HCT116 (cell line): ENCODE measurements at regions of chr13 and their contacts with region 1.

Region 1: GRCh38 chr13:81017513-81018152 is 676.7 kb upstream of the SPRY2 start:
- DNase-seq: peak; percentile 16
- ATAC-seq: no peak
- H3K4me3 ChIP-seq: no peak overlapping the region
- H3K27ac ChIP-seq: no peak overlapping the region
- H3K4me1 ChIP-seq: no peaks in the 10 kb centered on the region
- H3K27me3 ChIP-seq: no peaks in the 10 kb centered on the region
- CTCF ChIP-seq: peak; percentile 16 to 53 (median 27); a peak in 3 of 6 replicates
- POLR2A ChIP-seq: no peak
- RAD21 ChIP-seq: peak; percentile 56

Region 2: DNA sequence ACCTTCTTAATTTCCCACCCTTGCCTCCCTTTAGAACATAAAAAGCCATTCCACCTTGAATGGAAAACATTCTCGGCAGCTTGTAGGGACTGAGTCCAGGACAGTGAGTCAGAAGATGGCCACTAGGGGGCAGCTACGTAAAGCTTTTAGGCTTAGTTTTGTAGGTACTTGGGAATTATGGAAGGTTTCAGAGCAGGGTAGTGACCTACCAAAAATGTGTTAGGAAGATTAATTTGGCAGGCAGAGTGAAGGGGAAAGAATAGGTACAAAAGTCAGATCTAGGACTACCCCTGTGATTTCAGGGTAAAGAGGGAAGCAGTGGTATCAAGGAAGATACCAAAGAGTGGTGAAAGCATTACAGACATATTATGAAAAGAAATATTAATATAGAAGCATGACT is 1338.3 kb before region 1 on chr13:
- CTCF ChIA-PET with region 1: interaction called, 7 read pairs
- POLR2A ChIA-PET with region 1: no interaction called
- RAD21 ChIA-PET with region 1: no interaction called
- intact Hi-C with region 1: loop called (anchors 2 kb)
- DNase-seq: peak; percentile 56
- ATAC-seq: peak; percentile 80
- H3K4me3 ChIP-seq: no peak overlapping the region
- H3K27ac ChIP-seq: no peak overlapping the region
- H3K4me1 ChIP-seq: no peaks in the 10 kb centered on the region
- H3K27me3 ChIP-seq: no peaks in the 10 kb centered on the region
- CTCF ChIP-seq: peak; percentile 40 to 87 (median 76); a peak in 5 of 6 replicates
- POLR2A ChIP-seq: no peak
- RAD21 ChIP-seq: peak; percentile 68; the same call in 1 of the 2 replicates

Region 3: GRCh38 chr13:80979035-80979641 is 38.5 kb before region 1 on chr13:
- CTCF ChIA-PET with region 1: interaction called, 14 read pairs
- POLR2A ChIA-PET with region 1: no interaction called
- RAD21 ChIA-PET with region 1: no interaction called
- intact Hi-C with region 1: loop called (anchors 1 kb)
- DNase-seq: peak; percentile 46
- ATAC-seq: peak; percentile 71; the same call in 1 of the 2 replicates
- H3K4me3 ChIP-seq: no peak overlapping the region
- H3K27ac ChIP-seq: no peak overlapping the region
- H3K4me1 ChIP-seq: no peaks in the 10 kb centered on the region
- H3K27me3 ChIP-seq: no peaks in the 10 kb centered on the region
- CTCF ChIP-seq: peak; percentile 41 to 87 (median 72); a peak in 5 of 6 replicates
- POLR2A ChIP-seq: no peak
- RAD21 ChIP-seq: peak; percentile 61

Region 4: DNA sequence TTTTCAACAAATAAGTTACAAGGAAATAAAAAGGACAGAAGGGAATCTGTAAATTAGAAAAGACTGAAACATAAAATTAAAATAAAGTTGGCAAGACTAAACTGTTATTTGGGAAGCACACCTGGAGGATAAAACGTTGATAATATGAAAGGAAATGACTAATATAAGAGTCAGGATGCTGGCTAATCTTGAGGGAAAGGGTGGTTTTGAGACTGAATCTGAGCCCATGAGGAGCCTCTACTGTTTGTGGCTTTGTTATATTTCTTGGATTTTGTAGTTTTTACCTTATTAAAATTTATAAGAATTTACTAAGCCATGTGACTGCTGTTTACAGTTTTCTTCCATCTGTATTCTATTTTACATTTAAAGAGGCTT is 41.3 kb after region 1 on chr13:
- CTCF ChIA-PET with region 1: no interaction called
- POLR2A ChIA-PET with region 1: no interaction called
- RAD21 ChIA-PET with region 1: no interaction called
- intact Hi-C with region 1: no loop called
- DNase-seq: no peak
- ATAC-seq: no peak
- H3K4me3 ChIP-seq: no peak overlapping the region
- H3K27ac ChIP-seq: no peak overlapping the region
- H3K4me1 ChIP-seq: no peaks in the 10 kb centered on the region
- H3K27me3 ChIP-seq: no peaks in the 10 kb centered on the region
- CTCF ChIP-seq: no peak
- POLR2A ChIP-seq: no peak
- RAD21 ChIP-seq: no peak